ENCODE measurements at regions of chr7 and their contacts with region 1.

Region 1: DNA sequence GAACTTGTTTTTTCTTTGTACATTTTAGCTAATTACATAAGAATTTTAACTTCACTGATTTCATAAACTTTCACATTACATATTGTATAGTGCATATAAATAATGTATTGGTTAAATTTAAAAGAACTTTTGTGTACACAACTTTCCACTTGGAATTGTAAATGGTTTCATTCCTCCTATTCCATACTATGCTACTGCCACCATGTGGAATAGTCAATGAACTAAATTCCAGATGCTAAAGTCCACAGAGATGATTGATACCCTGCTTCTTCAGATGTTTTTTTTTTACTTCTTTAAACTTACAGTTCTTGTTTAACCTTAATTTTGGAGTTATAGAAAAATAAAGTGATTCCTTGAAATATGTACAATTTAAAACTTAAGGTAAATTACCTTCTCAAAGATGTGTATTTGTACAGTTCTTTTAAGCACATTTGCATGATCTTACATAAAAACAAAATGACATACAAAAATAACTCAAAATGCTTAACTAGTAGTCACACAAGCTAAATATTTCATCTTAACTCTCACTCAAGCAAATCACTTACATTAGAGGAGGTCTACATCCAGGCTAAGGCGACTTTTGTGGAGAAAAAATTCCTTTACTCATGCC is 247.6 kb upstream of the HGF start:
- DNase-seq: peak; percentile 9
- ATAC-seq: peak; percentile 57; the same call in 1 of the 3 replicates
- H3K4me3 ChIP-seq: no peak overlapping the region
- H3K27ac ChIP-seq: no peak overlapping the region
- H3K4me1 ChIP-seq: no peaks in the 10 kb centered on the region
- H3K27me3 ChIP-seq: no peaks in the 10 kb centered on the region
- CTCF ChIP-seq: peak; percentile 51
- EP300 ChIP-seq: no peak
- POLR2A ChIP-seq: no peak
- RAD21 ChIP-seq: no peak

Region 2: GRCh38 chr7:81482600-81483186 is 534.7 kb before region 1 on chr7:
- CTCF ChIA-PET with region 1: interaction called, 7 read pairs
- POLR2A ChIA-PET with region 1: no interaction called
- in situ Hi-C with region 1: no loop called
- intact Hi-C with region 1: loop called (anchors 5 kb)
- DNase-seq: peak; percentile 4
- ATAC-seq: no peak
- H3K4me3 ChIP-seq: no peak overlapping the region
- H3K27ac ChIP-seq: no peak overlapping the region
- H3K4me1 ChIP-seq: peaks cover 14% of the 10 kb centered on the region
- H3K27me3 ChIP-seq: no peaks in the 10 kb centered on the region
- CTCF ChIP-seq: peak; percentile 47
- EP300 ChIP-seq: no peak
- POLR2A ChIP-seq: no peak
- RAD21 ChIP-seq: no peak

Region 3: DNA sequence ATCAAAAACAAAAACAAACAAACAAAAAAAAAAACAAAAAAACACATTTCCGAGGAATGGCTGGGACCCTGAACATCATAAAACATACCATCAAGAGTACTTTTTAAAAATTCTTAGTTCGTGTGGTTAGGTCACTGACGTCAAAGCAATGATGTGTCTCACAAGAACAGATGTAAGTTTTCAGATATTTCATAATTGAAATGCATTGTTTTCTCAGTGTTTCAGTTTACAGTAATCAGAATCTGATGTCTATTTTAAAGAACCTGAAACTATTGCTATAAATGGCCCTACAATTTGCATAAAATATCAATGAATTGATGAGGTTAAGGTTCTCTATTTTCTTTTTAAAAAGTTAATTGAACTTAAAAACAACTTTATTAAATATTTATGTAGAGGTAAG is 143.9 kb before region 1 on chr7:
- CTCF ChIA-PET with region 1: no interaction called
- POLR2A ChIA-PET with region 1: no interaction called
- in situ Hi-C with region 1: no loop called
- intact Hi-C with region 1: no loop called
- DNase-seq: no peak
- ATAC-seq: no peak
- H3K4me3 ChIP-seq: no peak overlapping the region
- H3K27ac ChIP-seq: no peak overlapping the region
- H3K4me1 ChIP-seq: no peaks in the 10 kb centered on the region
- H3K27me3 ChIP-seq: peaks cover 0 to 1% of the 10 kb centered on the region in 2 experiments; a peak in 1 of 5 replicates
- CTCF ChIP-seq: no peak
- EP300 ChIP-seq: no peak
- POLR2A ChIP-seq: no peak
- RAD21 ChIP-seq: no peak